Activated naive CD4-positive, alpha-beta T cell treated with anti-CD3 and anti-CD28 coated beads, Interleukin-2, amount 10 ng/mL, durations not matched to agents 7 days and 5 days (primary cell): ENCODE measurements at regions of chr3 and their contacts with region 1.

Region 1: DNA sequence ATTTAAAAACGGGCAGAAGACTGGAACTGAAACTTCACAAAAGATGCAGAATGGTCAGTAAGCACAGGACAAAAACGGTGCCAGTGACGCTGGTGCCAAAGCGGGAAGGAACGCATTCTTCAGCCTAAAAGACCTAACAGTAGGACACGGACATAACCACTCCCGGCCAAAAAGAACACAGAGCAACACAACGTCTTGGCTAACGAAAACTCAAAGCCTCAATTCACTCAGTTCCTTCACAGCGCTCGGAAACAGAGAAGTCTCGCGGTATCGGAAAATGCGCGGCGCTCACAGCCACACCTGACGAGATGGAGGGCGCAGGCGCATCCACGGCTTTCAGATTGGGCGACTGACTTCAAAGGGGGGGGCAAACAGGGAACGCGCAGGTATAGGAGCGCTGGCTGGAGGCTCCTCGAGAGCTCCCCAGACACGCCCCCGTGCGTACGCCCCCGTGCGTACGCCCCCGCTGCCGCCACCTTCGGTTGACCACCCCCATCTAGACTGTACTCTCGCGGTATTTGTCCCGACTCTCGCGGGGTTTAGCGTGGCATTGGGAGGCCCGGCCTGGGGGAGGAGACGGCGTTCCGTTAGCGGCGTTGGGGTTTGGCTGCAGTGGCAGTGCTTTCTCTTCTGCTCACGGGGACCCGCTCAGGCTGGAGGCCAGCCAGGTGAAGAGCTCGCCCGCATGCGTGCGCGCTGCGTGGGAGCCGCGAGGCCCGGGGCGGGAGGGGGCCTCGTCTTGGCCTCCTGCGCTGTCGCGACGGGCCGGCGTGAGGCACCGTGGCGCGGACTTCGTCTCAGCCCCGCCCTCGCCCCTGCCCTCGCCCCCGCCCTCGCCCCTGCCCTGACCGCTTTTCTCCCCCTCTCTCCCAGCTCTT is at the start of gene NKTR:
- DNase-seq: peak; percentile 100
- H3K4me3 Mint-ChIP-seq: peak within 1 kb of the TSS; percentile 93
- H3K27ac Mint-ChIP-seq: peak within 1 kb of the TSS; percentile 100
- H3K4me1 Mint-ChIP-seq: peaks cover 46% of the 10 kb centered on the region
- H3K27me3 Mint-ChIP-seq: no peaks in the 10 kb centered on the region

Region 2: GRCh38 chr3:42613462-42613861 is 13.1 kb after region 1 on chr3:
- CTCF ChIA-PET with region 1: interaction called, 10 read pairs
- DNase-seq: no peak
- H3K4me3 Mint-ChIP-seq: no peak overlapping the region
- H3K27ac Mint-ChIP-seq: peak overlapping the region; percentile 1
- H3K4me1 Mint-ChIP-seq: peaks cover 44% of the 10 kb centered on the region
- H3K27me3 Mint-ChIP-seq: no peaks in the 10 kb centered on the region